ENCODE measurements at regions of chr5 and their contacts with region 1.

Region 1: DNA sequence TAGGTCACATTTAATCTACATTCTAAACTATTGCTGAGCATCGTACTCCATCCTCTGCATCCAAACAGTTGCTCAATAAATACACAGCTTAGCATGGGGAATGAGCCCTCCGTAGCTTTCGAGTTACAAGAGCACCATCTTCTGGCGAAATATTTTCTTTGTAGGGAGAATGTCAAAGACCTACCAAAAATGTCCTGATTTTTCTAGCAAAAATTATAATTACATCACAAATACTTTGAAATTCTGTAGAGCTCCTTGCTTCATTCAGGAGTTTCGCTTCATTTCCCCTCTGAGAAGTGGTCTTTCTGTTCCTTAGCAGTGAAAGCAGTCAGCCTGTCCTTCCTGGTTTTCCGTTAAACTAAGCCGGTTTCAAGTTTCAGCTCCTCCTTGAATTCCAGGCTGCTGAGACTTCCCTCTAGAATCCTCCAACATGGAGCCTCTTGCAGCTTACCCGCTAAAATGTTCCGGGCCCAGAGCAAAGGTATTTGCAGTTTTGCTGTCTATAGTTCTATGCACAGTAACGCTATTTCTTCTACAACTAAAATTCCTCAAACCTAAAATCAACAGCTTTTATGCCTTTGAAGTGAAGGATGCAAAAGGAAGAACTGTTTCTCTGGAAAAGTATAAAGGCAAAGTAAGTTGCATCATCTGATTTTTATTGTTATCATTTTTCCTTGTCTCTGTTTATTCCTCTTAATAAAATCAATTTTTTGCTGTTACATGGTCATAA is at the start of gene GPX8:
- DNase-seq: peak; percentile 36
- H3K4me3 ChIP-seq: peak within 1 kb of the TSS; percentile 26
- H3K27ac ChIP-seq: peak within 1 kb of the TSS; percentile 21
- H3K4me1 ChIP-seq: no peaks in the 10 kb centered on the region
- H3K27me3 ChIP-seq: no peaks in the 10 kb centered on the region
- CTCF ChIP-seq: peak; percentile 29
- total RNA-seq, gene GPX8: 7.1 TPM

Region 2: GRCh38 chr5:54905943-54906537 is 253.9 kb before region 1 on chr5:
- intact Hi-C with region 1: loop called (anchors 5 kb)
- DNase-seq: peak; percentile 60
- H3K4me3 ChIP-seq: no peak overlapping the region
- H3K27ac ChIP-seq: no peak overlapping the region
- H3K4me1 ChIP-seq: no peaks in the 10 kb centered on the region
- H3K27me3 ChIP-seq: no peaks in the 10 kb centered on the region
- CTCF ChIP-seq: peak; percentile 57